ENCODE measurements at regions of chr18 and their contacts with region 1.

Region 1: GRCh38 chr18:59837586-59837985 is 62.2 kb upstream of the PMAIP1 start:
- DNase-seq: peak; percentile 81
- ATAC-seq: peak; percentile 72
- H3K4me3 ChIP-seq: no peak overlapping the region
- H3K4me3 Mint-ChIP-seq: no peak overlapping the region
- H3K27ac ChIP-seq: no peak overlapping the region
- H3K27ac Mint-ChIP-seq: no peak overlapping the region
- H3K4me1 ChIP-seq: peaks cover 5 to 19% of the 10 kb centered on the region in 2 donors
- H3K4me1 Mint-ChIP-seq: peaks cover 24% of the 10 kb centered on the region
- H3K27me3 ChIP-seq: no peaks in the 10 kb centered on the region
- H3K27me3 Mint-ChIP-seq: no peaks in the 10 kb centered on the region
- CTCF ChIP-seq: peak; percentile 93

Region 2: GRCh38 chr18:59918320-59918755 is 80.8 kb after region 1 on chr18:
- CTCF ChIA-PET with region 1: interaction called, 11 read pairs
- POLR2A ChIA-PET with region 1: no interaction called
- intact Hi-C with region 1: no loop called
- DNase-seq: peak; percentile 54
- ATAC-seq: peak; percentile 82
- H3K4me3 ChIP-seq: peak overlapping the region in 4 of 5 experiments; percentile 15 to 43 (median 34)
- H3K4me3 Mint-ChIP-seq: peak overlapping the region; percentile 74
- H3K27ac ChIP-seq: no peak overlapping the region
- H3K27ac Mint-ChIP-seq: peak overlapping the region; percentile 68
- H3K4me1 ChIP-seq: peaks cover 28 to 39% of the 10 kb centered on the region in 2 donors
- H3K4me1 Mint-ChIP-seq: peaks cover 35% of the 10 kb centered on the region
- H3K27me3 ChIP-seq: no peaks in the 10 kb centered on the region
- H3K27me3 Mint-ChIP-seq: no peaks in the 10 kb centered on the region
- CTCF ChIP-seq: no peak

Region 3: GRCh38 chr18:59961086-59961485 is 123.5 kb after region 1 on chr18:
- CTCF ChIA-PET with region 1: interaction called, 8 read pairs
- POLR2A ChIA-PET with region 1: no interaction called
- intact Hi-C with region 1: loop called (anchors 5 kb)
- DNase-seq: peak; percentile 73
- ATAC-seq: peak; percentile 89
- H3K4me3 ChIP-seq: peak overlapping the region in 1 of 5 experiments; percentile 32
- H3K4me3 Mint-ChIP-seq: peak overlapping the region; percentile 68
- H3K27ac ChIP-seq: peak overlapping the region; percentile 50 to 61
- H3K27ac Mint-ChIP-seq: peak overlapping the region; percentile 90
- H3K4me1 ChIP-seq: peaks cover 40 to 44% of the 10 kb centered on the region in 2 donors
- H3K4me1 Mint-ChIP-seq: peaks cover 44% of the 10 kb centered on the region
- H3K27me3 ChIP-seq: no peaks in the 10 kb centered on the region
- H3K27me3 Mint-ChIP-seq: no peaks in the 10 kb centered on the region
- CTCF ChIP-seq: no peak

Region 4: GRCh38 chr18:59980188-59980637 is 142.6 kb after region 1 on chr18:
- CTCF ChIA-PET with region 1: interaction called, 15 read pairs
- POLR2A ChIA-PET with region 1: no interaction called
- intact Hi-C with region 1: no loop called
- DNase-seq: no peak
- ATAC-seq: no peak
- H3K4me3 ChIP-seq: no peak overlapping the region
- H3K4me3 Mint-ChIP-seq: no peak overlapping the region
- H3K27ac ChIP-seq: no peak overlapping the region
- H3K27ac Mint-ChIP-seq: no peak overlapping the region
- H3K4me1 ChIP-seq: no peaks in the 10 kb centered on the region
- H3K4me1 Mint-ChIP-seq: peaks cover 4% of the 10 kb centered on the region
- H3K27me3 ChIP-seq: no peaks in the 10 kb centered on the region
- H3K27me3 Mint-ChIP-seq: no peaks in the 10 kb centered on the region
- CTCF ChIP-seq: no peak

Region 5: GRCh38 chr18:59996370-59996966 is 158.9 kb after region 1 on chr18:
- CTCF ChIA-PET with region 1: interaction called, 81 read pairs
- POLR2A ChIA-PET with region 1: no interaction called
- intact Hi-C with region 1: loop called (anchors 1 kb)
- DNase-seq: no peak
- ATAC-seq: no peak
- H3K4me3 ChIP-seq: no peak overlapping the region
- H3K4me3 Mint-ChIP-seq: no peak overlapping the region
- H3K27ac ChIP-seq: no peak overlapping the region
- H3K27ac Mint-ChIP-seq: no peak overlapping the region
- H3K4me1 ChIP-seq: no peaks in the 10 kb centered on the region
- H3K4me1 Mint-ChIP-seq: no peaks in the 10 kb centered on the region
- H3K27me3 ChIP-seq: peaks cover 0 to 3% (median 0%) of the 10 kb centered on the region in 4 experiments
- H3K27me3 Mint-ChIP-seq: peaks cover 35% of the 10 kb centered on the region
- CTCF ChIP-seq: peak; percentile 64

Measured in B cell (primary cell).